ENCODE measurements at regions of chr4 and their contacts with region 1.

Region 1: DNA sequence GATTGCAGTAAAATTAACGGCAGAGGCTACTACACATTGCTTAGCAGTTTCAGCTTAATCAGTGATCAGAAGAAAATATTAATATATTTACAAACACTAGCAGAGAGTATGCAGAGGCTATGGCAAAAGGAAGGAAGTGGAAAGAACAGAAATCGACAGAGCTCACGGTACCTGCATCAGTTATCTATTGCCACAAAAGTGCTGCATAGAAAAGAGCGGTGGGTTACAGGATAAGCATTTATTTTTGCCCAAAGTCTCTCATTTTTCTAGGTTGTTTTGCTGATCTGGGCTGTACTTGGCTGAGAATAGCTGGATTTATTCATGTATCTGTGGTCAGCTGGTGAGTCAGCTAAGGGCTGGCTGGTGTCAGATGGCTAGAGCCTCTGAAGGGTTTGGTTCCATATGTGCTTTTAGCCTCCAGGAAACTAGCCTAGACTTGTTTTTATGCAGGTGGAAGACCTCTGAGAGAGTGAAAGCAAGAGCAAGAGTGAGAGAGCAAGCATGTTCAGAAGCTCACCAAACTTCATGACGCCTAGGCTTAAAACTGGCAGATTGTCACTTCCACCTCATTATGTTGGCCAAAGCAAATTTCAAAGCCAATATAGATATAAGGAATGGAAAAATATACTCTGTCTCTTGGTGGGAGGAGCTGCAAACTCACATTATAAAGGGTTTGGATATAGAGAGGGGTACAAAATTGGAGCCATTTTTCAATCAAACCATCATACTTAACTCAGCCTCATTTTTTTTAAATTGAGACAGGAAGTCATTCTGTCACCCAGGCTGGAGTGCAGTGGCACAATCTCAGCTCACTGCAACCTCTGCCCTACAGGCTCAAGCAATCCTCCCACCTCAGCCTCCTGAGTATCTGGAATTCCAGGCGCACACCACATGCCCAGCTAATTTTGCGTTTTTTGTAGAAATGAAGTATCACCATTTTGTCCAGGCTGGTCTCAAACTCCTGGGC is 153.2 kb upstream of the RPL34 start:
- DNase-seq: peak in 1 of 2 experiments; percentile 7
- H3K4me3 ChIP-seq: no peak overlapping the region
- H3K27ac ChIP-seq: no peak overlapping the region
- H3K4me1 ChIP-seq: no peaks in the 10 kb centered on the region
- H3K27me3 ChIP-seq: no peaks in the 10 kb centered on the region
- CTCF ChIP-seq: no peak

Region 2: DNA sequence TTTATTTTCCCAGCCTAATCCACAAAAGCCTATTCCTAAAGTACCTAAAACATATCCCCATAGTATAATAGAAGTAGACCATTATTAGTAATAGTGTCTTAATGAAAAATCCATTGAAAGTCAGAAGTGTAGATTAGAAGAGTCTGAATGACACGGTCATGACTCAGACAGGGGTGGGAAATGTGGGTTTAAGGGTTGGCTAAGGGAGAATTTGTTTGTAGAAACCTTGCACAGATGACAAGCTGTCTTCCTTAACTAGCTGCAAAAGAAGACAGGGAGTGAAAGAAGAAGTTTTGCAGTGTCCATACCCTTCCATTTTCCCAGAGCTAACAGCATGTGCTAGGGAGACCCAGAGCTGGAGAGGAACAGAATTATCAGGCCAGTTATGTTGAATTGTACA is 538.3 kb after region 1 on chr4:
- CTCF ChIA-PET with region 1: interaction called, 12 read pairs
- POLR2A ChIA-PET with region 1: no interaction called
- intact Hi-C with region 1: no loop called
- DNase-seq: no peak
- H3K4me3 ChIP-seq: no peak overlapping the region
- H3K27ac ChIP-seq: no peak overlapping the region
- H3K4me1 ChIP-seq: no peaks in the 10 kb centered on the region
- H3K27me3 ChIP-seq: no peaks in the 10 kb centered on the region
- CTCF ChIP-seq: no peak